ENCODE measurements at regions of chr10 and their contacts with region 1.

Region 1: GRCh38 chr10:11757821-11758463 is 15.8 kb downstream of the ECHDC3 start:
- DNase-seq: peak; percentile 86
- H3K4me3 ChIP-seq: peak overlapping the region in 1 of 2 experiments; percentile 38; a peak in 1 of 4 replicates
- H3K27ac ChIP-seq: peak overlapping the region; percentile 25 to 32; a peak in 3 of 4 replicates
- H3K4me1 ChIP-seq: peaks cover 10 to 13% of the 10 kb centered on the region in 2 experiments; a peak in 2 of 4 replicates
- H3K27me3 ChIP-seq: no peaks in the 10 kb centered on the region
- CTCF ChIP-seq: peak; percentile 92
- EP300 ChIP-seq: no peak
- RAD21 ChIP-seq: peak; percentile 90

Region 2: DNA sequence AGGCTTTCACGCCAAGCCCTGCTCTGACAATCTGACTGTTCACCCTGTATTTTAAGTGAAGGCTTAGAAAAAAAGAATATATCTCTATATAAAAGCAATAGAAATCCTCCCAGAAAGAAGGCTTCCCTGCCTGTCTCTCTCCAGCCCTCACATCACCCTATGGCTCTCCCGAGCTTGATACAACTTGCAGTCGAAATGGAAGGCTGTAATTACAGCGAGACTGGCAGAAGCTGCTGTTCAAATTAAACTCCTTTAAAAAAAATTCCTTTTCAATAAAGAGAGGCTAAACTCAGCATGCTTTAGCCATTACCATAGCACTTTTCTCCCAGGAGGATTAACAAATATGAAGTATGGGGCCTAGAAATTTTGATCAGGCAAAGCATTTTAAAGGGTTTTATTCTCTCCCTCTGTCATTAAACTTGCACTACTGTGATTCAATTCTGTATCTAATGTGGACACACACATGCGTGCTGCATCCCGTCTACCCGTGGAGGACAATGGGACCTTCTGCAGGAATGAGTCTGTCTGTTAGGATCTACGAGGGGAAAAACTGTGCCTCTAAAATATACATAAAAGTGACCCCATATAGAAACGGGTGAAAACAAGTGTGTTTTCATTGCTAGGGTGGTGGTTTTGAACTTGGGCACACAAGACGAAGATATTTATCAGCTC is 370.3 kb before region 1 on chr10:
- CTCF ChIA-PET with region 1: no interaction called
- POLR2A ChIA-PET with region 1: no interaction called
- DNase-seq: no peak
- H3K4me3 ChIP-seq: no peak overlapping the region
- H3K27ac ChIP-seq: no peak overlapping the region
- H3K4me1 ChIP-seq: no peaks in the 10 kb centered on the region
- H3K27me3 ChIP-seq: no peaks in the 10 kb centered on the region
- CTCF ChIP-seq: no peak
- EP300 ChIP-seq: no peak
- RAD21 ChIP-seq: no peak

Region 3: DNA sequence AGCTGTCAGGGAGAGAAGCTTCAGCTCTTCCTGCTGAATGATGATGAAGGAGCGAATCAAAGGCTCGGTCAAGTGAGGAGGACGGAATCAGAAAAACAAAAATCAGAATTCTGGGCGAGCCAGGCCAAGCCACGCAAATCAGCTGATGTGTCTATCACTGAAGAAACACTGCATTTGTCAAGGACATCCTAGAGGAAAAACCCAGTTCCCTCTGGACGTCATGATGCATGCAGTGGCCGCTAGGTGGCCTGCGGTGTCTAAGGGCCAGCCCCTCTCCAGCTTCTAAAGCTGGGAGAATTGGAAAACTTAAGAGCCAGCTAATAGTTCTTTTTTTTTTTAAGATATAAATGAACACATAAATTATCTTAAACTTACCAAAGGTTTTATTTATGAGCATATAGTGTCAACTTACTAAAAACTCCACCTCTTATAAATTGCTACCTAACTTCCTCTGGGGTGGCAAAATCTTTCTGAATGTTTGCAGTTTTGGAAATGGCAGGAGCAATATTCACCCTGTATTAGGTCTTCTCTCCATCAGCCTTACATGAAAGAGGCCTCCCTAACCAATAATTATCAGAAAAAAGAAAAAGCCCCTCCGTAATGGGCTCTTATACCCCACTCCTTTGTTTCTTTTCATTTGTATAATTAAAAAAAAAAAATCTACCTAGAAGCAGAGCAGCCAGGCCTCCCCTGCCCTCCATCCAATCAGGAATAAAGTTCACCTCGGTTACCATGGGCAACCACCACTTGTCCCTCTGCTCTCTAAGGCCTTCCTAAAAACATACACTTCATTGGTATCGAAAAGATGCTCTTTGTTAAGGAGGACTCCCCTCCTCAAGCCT is 333.3 kb before region 1 on chr10:
- CTCF ChIA-PET with region 1: interaction called, 13 read pairs
- POLR2A ChIA-PET with region 1: no interaction called
- DNase-seq: peak; percentile 76
- H3K4me3 ChIP-seq: peak overlapping the region in 1 of 2 experiments; percentile 26; a peak in 1 of 4 replicates
- H3K27ac ChIP-seq: no peak overlapping the region
- H3K4me1 ChIP-seq: no peaks in the 10 kb centered on the region; a peak in 1 of 4 replicates
- H3K27me3 ChIP-seq: no peaks in the 10 kb centered on the region
- CTCF ChIP-seq: peak; percentile 73
- EP300 ChIP-seq: no peak
- RAD21 ChIP-seq: peak; percentile 74

Region 4: DNA sequence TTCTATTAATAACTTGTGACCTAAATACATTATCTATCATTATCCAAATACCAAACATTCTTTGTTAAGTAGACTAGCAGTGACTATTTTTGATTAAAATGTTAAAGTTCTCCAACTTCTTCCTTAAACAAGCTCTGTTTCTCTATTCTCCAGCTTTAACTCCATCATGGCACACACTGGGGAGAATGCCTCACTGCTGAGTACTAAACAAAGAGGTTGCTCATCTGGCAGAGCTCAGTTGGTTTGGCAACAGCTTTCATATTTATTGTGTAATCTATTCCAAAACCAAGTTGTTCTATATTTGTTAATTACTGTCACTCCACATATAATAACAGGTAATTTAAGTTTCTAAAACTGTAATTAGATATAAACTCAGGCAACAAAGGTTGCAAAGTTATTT is 236.1 kb before region 1 on chr10:
- CTCF ChIA-PET with region 1: interaction called, 17 read pairs
- POLR2A ChIA-PET with region 1: no interaction called
- DNase-seq: no peak
- H3K4me3 ChIP-seq: no peak overlapping the region
- H3K27ac ChIP-seq: no peak overlapping the region
- H3K4me1 ChIP-seq: peaks cover 0 to 12% of the 10 kb centered on the region in 2 experiments; a peak in 2 of 4 replicates
- H3K27me3 ChIP-seq: no peaks in the 10 kb centered on the region
- CTCF ChIP-seq: no peak
- EP300 ChIP-seq: no peak
- RAD21 ChIP-seq: no peak

Region 5: GRCh38 chr10:11724938-11725776 is 32.8 kb before region 1 on chr10:
- CTCF ChIA-PET with region 1: interaction called, 20 read pairs
- POLR2A ChIA-PET with region 1: no interaction called
- DNase-seq: peak; percentile 78
- H3K4me3 ChIP-seq: no peak overlapping the region
- H3K27ac ChIP-seq: no peak overlapping the region
- H3K4me1 ChIP-seq: no peaks in the 10 kb centered on the region; a peak in 1 of 4 replicates
- H3K27me3 ChIP-seq: no peaks in the 10 kb centered on the region
- CTCF ChIP-seq: peak; percentile 80
- EP300 ChIP-seq: no peak
- RAD21 ChIP-seq: peak; percentile 92

Region 6: GRCh38 chr10:11772575-11773288 is 14.8 kb after region 1 on chr10:
- CTCF ChIA-PET with region 1: interaction called, 19 read pairs
- POLR2A ChIA-PET with region 1: no interaction called
- DNase-seq: no peak
- H3K4me3 ChIP-seq: no peak overlapping the region
- H3K27ac ChIP-seq: no peak overlapping the region
- H3K4me1 ChIP-seq: no peaks in the 10 kb centered on the region
- H3K27me3 ChIP-seq: no peaks in the 10 kb centered on the region
- CTCF ChIP-seq: no peak
- EP300 ChIP-seq: no peak
- RAD21 ChIP-seq: no peak

Region 7: DNA sequence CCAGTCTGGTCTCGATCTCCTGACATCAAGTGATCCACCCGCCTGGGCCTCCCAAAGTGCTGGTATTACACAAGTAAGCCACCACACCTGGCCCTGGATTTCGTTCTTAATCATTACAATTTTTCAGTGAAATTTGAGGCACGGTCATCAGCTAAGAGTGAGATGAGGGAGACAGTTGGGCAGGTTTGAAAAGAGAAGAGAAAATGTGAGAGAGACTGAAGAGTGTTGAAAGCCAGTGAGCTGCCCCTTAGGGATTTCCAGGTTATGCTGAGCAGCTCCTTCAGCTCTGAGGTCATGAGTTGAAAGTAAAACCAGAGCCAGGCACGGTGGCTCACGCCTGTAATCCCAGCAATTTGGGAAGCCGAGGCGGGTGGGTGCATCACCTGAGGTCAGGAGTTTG is 290.6 kb after region 1 on chr10:
- CTCF ChIA-PET with region 1: no interaction called
- POLR2A ChIA-PET with region 1: no interaction called
- DNase-seq: no peak
- H3K4me3 ChIP-seq: no peak overlapping the region
- H3K27ac ChIP-seq: no peak overlapping the region
- H3K4me1 ChIP-seq: peaks cover 0 to 4% of the 10 kb centered on the region in 2 experiments; a peak in 1 of 4 replicates
- H3K27me3 ChIP-seq: no peaks in the 10 kb centered on the region
- CTCF ChIP-seq: no peak
- EP300 ChIP-seq: no peak
- RAD21 ChIP-seq: no peak

Region 8: DNA sequence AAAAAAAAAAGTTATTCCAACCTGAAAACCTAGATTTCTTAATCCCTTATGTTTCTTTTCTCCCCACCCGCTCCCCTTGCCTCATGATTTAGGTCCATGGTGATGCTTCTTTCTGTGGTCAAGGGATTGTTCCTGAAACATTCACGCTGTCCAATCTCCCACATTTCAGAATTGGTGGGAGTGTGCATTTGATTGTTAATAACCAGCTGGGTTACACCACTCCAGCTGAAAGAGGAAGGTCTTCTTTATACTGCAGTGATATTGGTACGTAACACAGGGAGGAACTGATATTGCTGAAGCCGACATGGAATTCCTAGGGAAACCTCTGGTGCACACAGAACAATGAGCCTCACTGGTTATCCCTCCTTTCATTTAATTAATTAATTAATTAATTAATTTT is 333.5 kb after region 1 on chr10:
- CTCF ChIA-PET with region 1: no interaction called
- POLR2A ChIA-PET with region 1: no interaction called
- DNase-seq: no peak
- H3K4me3 ChIP-seq: no peak overlapping the region
- H3K27ac ChIP-seq: no peak overlapping the region
- H3K4me1 ChIP-seq: no peaks in the 10 kb centered on the region
- H3K27me3 ChIP-seq: no peaks in the 10 kb centered on the region
- CTCF ChIP-seq: no peak
- EP300 ChIP-seq: no peak
- RAD21 ChIP-seq: no peak

Region 9: DNA sequence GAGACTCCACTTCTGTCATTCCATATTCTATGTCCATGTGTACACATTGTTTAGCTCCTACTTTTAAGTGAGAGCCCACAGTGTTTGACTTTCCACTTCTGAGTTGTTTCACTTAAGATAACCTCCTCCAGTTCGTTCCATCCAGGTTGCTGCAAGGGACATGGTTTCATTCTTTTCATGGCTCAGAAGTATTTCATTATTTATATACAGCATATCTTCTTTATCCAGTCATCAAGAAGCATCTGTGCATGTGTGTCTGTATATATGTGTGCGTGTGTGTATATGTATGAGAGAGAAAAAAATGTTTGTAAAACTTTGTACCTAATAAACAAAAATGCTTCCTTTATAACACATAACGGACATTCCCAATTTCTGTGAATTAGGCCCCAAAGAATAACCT is 377.7 kb after region 1 on chr10:
- CTCF ChIA-PET with region 1: no interaction called
- POLR2A ChIA-PET with region 1: no interaction called
- DNase-seq: no peak
- H3K4me3 ChIP-seq: no peak overlapping the region
- H3K27ac ChIP-seq: no peak overlapping the region
- H3K4me1 ChIP-seq: no peaks in the 10 kb centered on the region; a peak in 1 of 4 replicates
- H3K27me3 ChIP-seq: no peaks in the 10 kb centered on the region
- CTCF ChIP-seq: no peak
- EP300 ChIP-seq: no peak
- RAD21 ChIP-seq: no peak